H1 (cell line): ENCODE measurements at regions of chr20 and their contacts with region 1.

Region 1: DNA sequence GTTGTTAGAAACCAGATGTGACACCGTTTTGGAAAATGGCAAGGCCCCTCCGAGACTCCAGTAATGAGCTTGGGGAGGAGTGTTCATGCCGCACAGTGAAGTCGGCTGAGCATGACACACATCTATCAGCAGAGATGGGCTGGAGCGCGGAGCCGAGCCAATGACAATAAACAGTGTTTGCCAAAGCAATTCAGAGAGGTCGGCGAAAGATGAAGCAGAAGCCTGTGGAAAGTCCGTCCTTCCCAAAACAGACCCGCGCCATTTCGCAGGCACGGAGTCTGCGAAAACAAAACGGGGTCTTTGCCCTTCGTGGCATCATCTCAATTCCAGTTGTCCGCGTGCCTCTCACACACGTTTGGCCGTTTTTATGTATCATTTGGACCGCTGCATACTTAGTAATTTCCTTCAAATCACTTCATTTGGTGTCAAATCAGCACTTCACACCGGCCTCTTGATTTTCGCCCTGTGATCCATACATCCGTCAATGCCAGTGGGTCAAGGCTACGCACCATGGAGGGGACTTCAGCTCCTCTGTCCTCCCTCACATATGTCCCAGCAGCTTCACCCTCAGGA is 71.3 kb downstream of the SULF2 start:
- DNase-seq: no peak
- H3K4me3 ChIP-seq: no peak overlapping the region
- H3K27ac ChIP-seq: no peak overlapping the region
- H3K4me1 ChIP-seq: peaks cover 0 to 2% (median 0%) of the 10 kb centered on the region in 4 experiments; a peak in 1 of 7 replicates
- H3K27me3 ChIP-seq: no peaks in the 10 kb centered on the region
- CTCF ChIP-seq: no peak
- EP300 ChIP-seq: no peak
- POLR2A ChIP-seq: no peak
- RAD21 ChIP-seq: no peak

Region 2: DNA sequence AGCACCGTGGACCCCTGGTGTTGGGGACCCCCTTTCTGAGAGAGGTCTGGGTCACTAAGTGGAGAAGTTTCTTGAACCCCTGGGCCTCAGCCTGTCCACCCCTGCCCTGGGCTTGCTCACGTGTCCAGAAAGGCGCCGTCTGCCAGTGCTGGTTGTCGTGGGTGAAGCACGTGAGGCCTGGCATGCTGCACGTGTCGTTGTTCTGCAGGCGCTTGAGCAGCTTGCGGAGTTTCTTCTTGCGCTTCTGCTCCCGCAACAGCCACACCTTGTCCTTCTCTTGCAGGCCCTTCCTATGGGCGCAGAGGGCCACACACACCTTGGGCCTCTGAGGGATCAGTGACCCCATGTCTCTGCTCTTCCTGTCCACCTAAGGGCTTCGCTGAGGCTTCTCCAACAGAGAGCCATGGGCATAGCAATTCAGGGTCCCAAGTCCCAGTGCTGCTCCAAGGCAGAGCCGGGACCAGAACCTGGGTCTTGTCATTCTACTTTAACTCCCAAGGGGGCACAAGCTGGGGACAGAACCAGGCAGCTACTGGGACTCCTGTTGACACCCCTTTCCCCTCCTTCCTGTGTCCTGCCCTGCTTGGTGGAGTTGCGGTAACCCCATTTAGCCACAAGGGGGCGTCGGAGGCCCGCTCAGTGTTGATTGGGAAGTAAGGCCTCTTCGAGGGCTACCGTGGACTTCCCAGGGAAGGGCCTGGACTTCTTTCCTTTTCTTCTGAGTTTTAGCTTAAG is 50.5 kb before region 1 on chr20:
- CTCF ChIA-PET with region 1: interaction called, 14 read pairs
- POLR2A ChIA-PET with region 1: no interaction called
- DNase-seq: peak; percentile 75 to 99
- H3K4me3 ChIP-seq: no peak overlapping the region
- H3K27ac ChIP-seq: no peak overlapping the region
- H3K4me1 ChIP-seq: peaks cover 0 to 4% (median 1%) of the 10 kb centered on the region in 4 experiments; a peak in 4 of 7 replicates
- H3K27me3 ChIP-seq: no peaks in the 10 kb centered on the region
- CTCF ChIP-seq: peak; percentile 91 to 98 (median 95)
- EP300 ChIP-seq: no peak
- POLR2A ChIP-seq: no peak
- RAD21 ChIP-seq: peak; percentile 91 to 94

Region 3: GRCh38 chr20:47725248-47725973 is 11.4 kb after region 1 on chr20:
- CTCF ChIA-PET with region 1: interaction called, 11 read pairs
- POLR2A ChIA-PET with region 1: no interaction called
- DNase-seq: peak; percentile 70 to 85
- H3K4me3 ChIP-seq: no peak overlapping the region
- H3K27ac ChIP-seq: no peak overlapping the region
- H3K4me1 ChIP-seq: no peaks in the 10 kb centered on the region; a peak in 1 of 7 replicates
- H3K27me3 ChIP-seq: no peaks in the 10 kb centered on the region
- CTCF ChIP-seq: peak; percentile 79 to 94 (median 84)
- EP300 ChIP-seq: no peak
- POLR2A ChIP-seq: no peak
- RAD21 ChIP-seq: peak; percentile 89 to 93

Region 4: DNA sequence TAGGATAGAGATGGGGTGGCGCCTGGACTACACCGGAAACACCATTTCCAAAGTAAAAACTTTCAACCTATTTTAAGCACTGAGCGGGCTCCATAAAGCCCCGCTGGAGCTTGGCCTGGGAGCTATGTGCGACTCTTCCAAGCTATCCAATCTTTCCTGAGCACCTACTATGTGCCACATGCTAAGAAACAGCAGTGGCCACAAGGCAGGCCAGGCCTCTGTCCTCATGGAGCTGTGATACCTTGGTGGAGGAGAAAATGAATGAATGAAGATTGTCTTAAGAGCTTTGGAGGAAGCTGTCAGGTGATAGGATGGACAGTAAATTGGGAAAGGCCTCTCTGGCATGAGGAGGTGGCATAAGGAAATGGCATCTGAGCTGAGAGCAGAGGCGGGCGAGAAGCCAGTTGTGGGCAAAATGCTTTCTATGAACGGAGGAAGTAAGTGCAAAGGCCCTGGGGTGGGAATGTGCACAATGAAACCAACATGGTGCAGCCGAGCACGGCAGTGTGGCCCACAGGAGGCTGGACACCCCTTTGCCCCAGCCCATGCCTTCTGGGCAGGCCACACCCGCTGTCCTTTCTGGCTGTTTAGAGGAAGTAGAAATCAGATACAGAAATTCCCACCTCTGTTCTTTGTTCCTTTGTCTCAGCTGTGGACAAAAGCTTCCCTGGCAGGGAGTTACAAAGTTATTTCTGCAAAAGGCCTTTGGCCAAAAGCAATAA is 59.2 kb after region 1 on chr20:
- CTCF ChIA-PET with region 1: no interaction called
- POLR2A ChIA-PET with region 1: no interaction called
- DNase-seq: no peak
- H3K4me3 ChIP-seq: no peak overlapping the region
- H3K27ac ChIP-seq: no peak overlapping the region
- H3K4me1 ChIP-seq: no peaks in the 10 kb centered on the region
- H3K27me3 ChIP-seq: no peaks in the 10 kb centered on the region
- CTCF ChIP-seq: no peak
- EP300 ChIP-seq: no peak
- POLR2A ChIP-seq: no peak
- RAD21 ChIP-seq: no peak